Right ventricle myocardium superior (tissue), 1 donor: ENCODE measurements at regions of chr10 and their contacts with region 1.

Region 1: DNA sequence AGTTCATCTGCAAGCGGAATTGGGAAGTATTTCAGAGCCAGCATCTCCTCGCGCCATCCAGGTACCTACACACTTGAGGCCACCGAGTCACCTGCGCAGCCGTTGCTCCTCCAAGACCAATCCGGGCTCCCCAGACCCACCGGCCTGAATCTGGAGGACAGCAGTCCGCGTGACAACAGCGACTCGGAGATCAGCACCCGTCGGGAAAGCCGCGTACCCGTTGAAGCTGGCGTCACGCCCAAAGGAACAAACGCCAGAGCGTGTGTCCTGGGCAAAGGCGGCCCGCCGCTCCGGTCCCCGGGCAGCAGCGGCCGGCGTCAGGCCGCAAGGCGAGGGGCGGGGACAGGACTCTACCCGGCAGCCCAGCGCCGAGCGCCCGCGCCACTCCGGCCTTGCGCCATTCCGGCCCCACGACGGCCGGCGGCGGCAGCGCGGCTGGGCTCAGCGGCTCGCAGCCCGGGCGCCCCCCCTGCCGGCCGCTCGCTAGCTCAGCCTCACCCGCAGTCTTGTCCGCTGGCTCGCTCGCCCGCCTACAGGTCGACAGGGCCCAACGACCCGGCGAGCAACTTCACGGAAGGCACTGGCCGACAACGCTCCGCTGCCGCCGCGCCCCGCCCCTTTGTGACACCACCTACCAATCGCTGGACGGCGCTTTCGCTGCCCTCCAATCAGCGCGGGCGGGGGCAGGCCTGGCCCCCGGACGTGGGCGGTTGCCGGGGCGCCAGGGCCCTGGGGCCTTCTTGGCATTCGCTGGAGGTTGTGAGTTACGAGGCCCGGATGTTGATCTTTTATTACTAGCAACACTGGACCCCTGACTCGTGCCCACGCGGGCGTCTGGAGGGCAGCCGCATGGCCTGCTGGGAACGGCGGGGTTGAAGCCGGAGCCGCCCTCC is at the start of gene ZFAND4:
- DNase-seq: peak; percentile 99
- ATAC-seq: peak; percentile 99
- total RNA-seq, gene ZFAND4: 10.0 TPM

Region 2: DNA sequence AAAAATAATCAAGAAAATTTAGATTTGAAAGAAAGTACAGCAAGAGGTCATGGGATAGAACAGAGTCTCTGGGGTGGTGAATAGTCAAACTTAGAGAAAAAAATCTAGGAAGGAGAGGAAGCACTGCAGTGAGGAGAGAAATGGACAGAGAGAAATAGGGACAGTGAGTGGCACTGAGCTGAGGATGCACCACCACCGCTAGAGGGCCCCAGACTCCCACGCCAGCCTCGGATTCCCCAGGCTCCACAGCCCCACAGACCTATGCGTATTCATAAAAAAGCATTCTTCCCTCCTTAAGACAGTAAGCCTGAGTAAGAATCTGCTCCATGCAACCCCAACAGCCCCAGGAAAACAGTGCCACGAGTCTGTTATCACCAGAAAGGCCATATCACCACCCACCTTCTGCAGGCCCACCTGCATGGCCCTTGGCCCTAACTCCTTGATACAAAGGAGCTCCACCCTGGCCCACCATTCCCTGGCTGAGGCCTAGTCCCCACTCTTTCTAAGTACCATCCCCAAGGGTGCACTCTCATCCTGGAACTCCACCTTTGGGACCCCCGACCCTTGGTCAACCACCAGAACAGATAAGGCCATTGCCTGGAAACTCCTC is 207.4 kb before region 1 on chr10:
- intact Hi-C with region 1: loop called (anchors 2 kb)
- DNase-seq: peak; percentile 83
- ATAC-seq: peak; percentile 95

Region 3: DNA sequence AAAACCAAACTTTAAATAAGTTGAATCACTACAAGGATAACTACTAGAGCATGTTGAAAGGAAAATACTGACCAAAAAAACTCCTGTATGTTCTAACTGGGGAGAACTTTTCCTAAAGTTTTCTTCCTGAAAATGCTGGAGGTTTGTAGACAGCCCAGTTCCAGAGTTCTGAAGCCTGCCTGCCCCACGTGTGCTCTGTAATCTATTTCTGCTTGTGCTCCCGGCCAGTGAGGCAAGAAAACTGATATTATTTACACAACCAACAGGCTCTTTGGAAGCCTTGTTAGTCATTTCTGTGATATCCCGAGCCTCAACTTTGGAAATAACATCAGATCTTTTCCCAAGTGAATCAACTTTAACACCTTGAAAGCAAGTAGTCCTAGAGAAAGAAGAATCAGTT is 46.5 kb before region 1 on chr10:
- intact Hi-C with region 1: no loop called
- DNase-seq: no peak
- ATAC-seq: peak; percentile 69